ENCODE measurements at regions of chr11 and their contacts with region 1.

Region 1: GRCh38 chr11:130002846-130003716 is 446 bp upstream of the PRDM10 start:
- DNase-seq: peak; percentile 95
- H3K4me3 ChIP-seq: peak overlapping the region; percentile 70 to 95 (median 79)
- H3K27ac ChIP-seq: peak overlapping the region; percentile 100
- H3K4me1 ChIP-seq: peaks cover 18% of the 10 kb centered on the region
- H3K27me3 ChIP-seq: no peaks in the 10 kb centered on the region
- CTCF ChIP-seq: no peak

Region 2: GRCh38 chr11:129930296-129930695 is 72.8 kb before region 1 on chr11:
- CTCF ChIA-PET with region 1: no interaction called
- dilution Hi-C with region 1: no loop called
- in situ Hi-C with region 1: no loop called
- intact Hi-C with region 1: loop called (anchors 2 kb)
- DNase-seq: peak; percentile 76
- H3K4me3 ChIP-seq: no peak overlapping the region
- H3K27ac ChIP-seq: no peak overlapping the region
- H3K4me1 ChIP-seq: peaks cover 27% of the 10 kb centered on the region
- H3K27me3 ChIP-seq: no peaks in the 10 kb centered on the region
- CTCF ChIP-seq: no peak

Region 3: GRCh38 chr11:129950101-129951091 is 52.7 kb before region 1 on chr11:
- CTCF ChIA-PET with region 1: no interaction called
- dilution Hi-C with region 1: no loop called
- in situ Hi-C with region 1: no loop called
- intact Hi-C with region 1: no loop called
- DNase-seq: peak; percentile 69
- H3K4me3 ChIP-seq: no peak overlapping the region
- H3K27ac ChIP-seq: peak overlapping the region; percentile 5
- H3K4me1 ChIP-seq: peaks cover 19% of the 10 kb centered on the region
- H3K27me3 ChIP-seq: no peaks in the 10 kb centered on the region
- CTCF ChIP-seq: no peak

Region 4: GRCh38 chr11:130037058-130037457 is 34.0 kb after region 1 on chr11:
- CTCF ChIA-PET with region 1: no interaction called
- dilution Hi-C with region 1: no loop called
- in situ Hi-C with region 1: no loop called
- intact Hi-C with region 1: loop called (anchors 2 kb)
- DNase-seq: peak; percentile 93
- H3K4me3 ChIP-seq: no peak overlapping the region
- H3K27ac ChIP-seq: peak overlapping the region; percentile 78
- H3K4me1 ChIP-seq: peaks cover 25% of the 10 kb centered on the region
- H3K27me3 ChIP-seq: no peaks in the 10 kb centered on the region
- CTCF ChIP-seq: no peak

Region 5: GRCh38 chr11:130131961-130132850 is 129.1 kb after region 1 on chr11:
- CTCF ChIA-PET with region 1: no interaction called
- dilution Hi-C with region 1: no loop called
- in situ Hi-C with region 1: no loop called
- intact Hi-C with region 1: loop called (anchors 1 kb)
- DNase-seq: peak; percentile 65
- H3K4me3 ChIP-seq: no peak overlapping the region
- H3K27ac ChIP-seq: no peak overlapping the region
- H3K4me1 ChIP-seq: peaks cover 4% of the 10 kb centered on the region
- H3K27me3 ChIP-seq: no peaks in the 10 kb centered on the region
- CTCF ChIP-seq: peak; percentile 88 to 92

Measured in mammary epithelial cell (primary cell).